Caco-2 (cell line): ENCODE measurements at regions of chr20 and their contacts with region 1.

Region 1: GRCh38 chr20:8722276-8722928 is 346.5 kb upstream of the PLCB4 start:
- DNase-seq: peak; percentile 62 to 70
- H3K4me3 ChIP-seq: no peak overlapping the region
- H3K4me3 Mint-ChIP-seq: no peak overlapping the region
- H3K27ac Mint-ChIP-seq: no peak overlapping the region
- H3K4me1 ChIP-seq: no peaks in the 10 kb centered on the region
- H3K4me1 Mint-ChIP-seq: no peaks in the 10 kb centered on the region
- H3K27me3 ChIP-seq: no peaks in the 10 kb centered on the region
- H3K27me3 Mint-ChIP-seq: no peaks in the 10 kb centered on the region
- CTCF ChIP-seq: peak; percentile 68 to 77

Region 2: DNA sequence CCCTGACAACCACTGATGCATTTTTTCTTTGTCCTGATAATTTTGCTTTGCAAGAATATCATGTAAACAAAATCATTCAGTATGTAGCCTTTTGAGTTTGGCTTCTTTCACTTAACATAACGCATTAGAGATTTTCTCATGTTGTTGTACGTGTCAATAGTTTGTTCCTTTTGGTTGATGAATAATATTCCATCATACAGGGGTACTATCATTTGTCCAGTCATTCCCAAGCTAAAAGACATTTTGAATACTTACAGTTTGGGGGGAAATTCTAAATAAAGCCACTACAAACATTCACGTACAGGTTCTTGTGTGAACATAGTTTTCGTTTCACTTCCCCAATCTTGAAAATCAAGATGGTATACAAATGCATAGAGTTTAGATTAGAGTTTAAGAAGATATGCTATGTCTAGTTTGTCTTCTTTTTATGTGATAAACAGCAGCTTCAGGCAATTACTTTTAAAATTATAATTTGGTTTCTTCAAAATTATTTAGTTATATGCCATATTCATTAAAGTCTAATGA is 787.3 kb before region 1 on chr20:
- CTCF ChIA-PET with region 1: interaction called, 30 read pairs
- POLR2A ChIA-PET with region 1: no interaction called
- intact Hi-C with region 1: loop called (anchors 2 kb)
- DNase-seq: no peak
- H3K4me3 ChIP-seq: no peak overlapping the region
- H3K4me3 Mint-ChIP-seq: no peak overlapping the region
- H3K27ac Mint-ChIP-seq: no peak overlapping the region
- H3K4me1 ChIP-seq: no peaks in the 10 kb centered on the region
- H3K4me1 Mint-ChIP-seq: peaks cover 4% of the 10 kb centered on the region
- H3K27me3 ChIP-seq: no peaks in the 10 kb centered on the region
- H3K27me3 Mint-ChIP-seq: peaks cover 14% of the 10 kb centered on the region
- CTCF ChIP-seq: no peak

Region 3: DNA sequence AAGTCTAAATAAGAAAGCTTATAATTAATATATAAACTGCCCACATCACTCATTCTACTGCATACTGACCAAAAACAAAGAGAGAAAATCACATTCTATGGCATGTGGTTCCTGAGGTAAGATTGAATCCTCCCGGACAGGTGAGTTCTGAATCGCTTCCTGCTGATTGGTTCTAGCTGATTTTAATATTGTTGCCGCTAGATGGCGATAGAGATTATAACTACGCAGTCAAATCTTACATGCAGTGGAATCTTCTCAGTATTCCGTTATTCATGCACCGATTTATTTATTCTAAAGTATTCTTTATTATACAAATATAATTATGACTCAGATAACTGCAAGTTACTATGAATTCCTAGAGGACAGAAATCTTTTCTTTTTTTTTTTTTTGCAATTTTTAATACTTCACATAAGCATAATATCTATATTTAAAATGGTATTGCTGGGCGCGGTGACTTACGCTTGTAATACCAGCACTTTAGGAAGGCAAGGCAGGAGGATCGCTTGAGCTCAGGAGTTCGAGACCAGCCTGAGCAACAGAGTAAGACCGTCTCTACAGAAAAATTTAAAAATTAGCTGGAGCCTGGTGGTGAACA is 678.6 kb before region 1 on chr20:
- CTCF ChIA-PET with region 1: interaction called, 12 read pairs
- POLR2A ChIA-PET with region 1: no interaction called
- intact Hi-C with region 1: loop called (anchors 1 kb)
- DNase-seq: peak in 1 of 2 experiments; percentile 80
- H3K4me3 ChIP-seq: no peak overlapping the region
- H3K4me3 Mint-ChIP-seq: no peak overlapping the region
- H3K27ac Mint-ChIP-seq: no peak overlapping the region
- H3K4me1 ChIP-seq: peaks cover 13% of the 10 kb centered on the region
- H3K4me1 Mint-ChIP-seq: peaks cover 35% of the 10 kb centered on the region
- H3K27me3 ChIP-seq: no peaks in the 10 kb centered on the region
- H3K27me3 Mint-ChIP-seq: peaks cover 6% of the 10 kb centered on the region
- CTCF ChIP-seq: peak; percentile 52 to 72

Region 4: GRCh38 chr20:8389381-8390036 is 332.9 kb before region 1 on chr20:
- CTCF ChIA-PET with region 1: no interaction called
- POLR2A ChIA-PET with region 1: no interaction called
- intact Hi-C with region 1: loop called (anchors 5 kb)
- DNase-seq: peak in 1 of 2 experiments; percentile 27
- H3K4me3 ChIP-seq: no peak overlapping the region
- H3K4me3 Mint-ChIP-seq: no peak overlapping the region
- H3K27ac Mint-ChIP-seq: no peak overlapping the region
- H3K4me1 ChIP-seq: peaks cover 27% of the 10 kb centered on the region
- H3K4me1 Mint-ChIP-seq: no peaks in the 10 kb centered on the region
- H3K27me3 ChIP-seq: no peaks in the 10 kb centered on the region
- H3K27me3 Mint-ChIP-seq: no peaks in the 10 kb centered on the region
- CTCF ChIP-seq: peak; percentile 7 to 56

Region 5: GRCh38 chr20:8535403-8536261 is 186.8 kb before region 1 on chr20:
- CTCF ChIA-PET with region 1: interaction called, 3 read pairs
- POLR2A ChIA-PET with region 1: no interaction called
- intact Hi-C with region 1: loop called (anchors 1 kb)
- DNase-seq: peak in 1 of 2 experiments; percentile 55
- H3K4me3 ChIP-seq: no peak overlapping the region
- H3K4me3 Mint-ChIP-seq: no peak overlapping the region
- H3K27ac Mint-ChIP-seq: no peak overlapping the region
- H3K4me1 ChIP-seq: no peaks in the 10 kb centered on the region
- H3K4me1 Mint-ChIP-seq: no peaks in the 10 kb centered on the region
- H3K27me3 ChIP-seq: no peaks in the 10 kb centered on the region
- H3K27me3 Mint-ChIP-seq: no peaks in the 10 kb centered on the region
- CTCF ChIP-seq: peak; percentile 75 to 77